Activated CD4-positive, alpha-beta memory T cell treated with anti-CD3 and anti-CD28 coated beads for 36 hours (primary cell): ENCODE measurements at regions of chr1 and their contacts with region 1.

Region 1: DNA sequence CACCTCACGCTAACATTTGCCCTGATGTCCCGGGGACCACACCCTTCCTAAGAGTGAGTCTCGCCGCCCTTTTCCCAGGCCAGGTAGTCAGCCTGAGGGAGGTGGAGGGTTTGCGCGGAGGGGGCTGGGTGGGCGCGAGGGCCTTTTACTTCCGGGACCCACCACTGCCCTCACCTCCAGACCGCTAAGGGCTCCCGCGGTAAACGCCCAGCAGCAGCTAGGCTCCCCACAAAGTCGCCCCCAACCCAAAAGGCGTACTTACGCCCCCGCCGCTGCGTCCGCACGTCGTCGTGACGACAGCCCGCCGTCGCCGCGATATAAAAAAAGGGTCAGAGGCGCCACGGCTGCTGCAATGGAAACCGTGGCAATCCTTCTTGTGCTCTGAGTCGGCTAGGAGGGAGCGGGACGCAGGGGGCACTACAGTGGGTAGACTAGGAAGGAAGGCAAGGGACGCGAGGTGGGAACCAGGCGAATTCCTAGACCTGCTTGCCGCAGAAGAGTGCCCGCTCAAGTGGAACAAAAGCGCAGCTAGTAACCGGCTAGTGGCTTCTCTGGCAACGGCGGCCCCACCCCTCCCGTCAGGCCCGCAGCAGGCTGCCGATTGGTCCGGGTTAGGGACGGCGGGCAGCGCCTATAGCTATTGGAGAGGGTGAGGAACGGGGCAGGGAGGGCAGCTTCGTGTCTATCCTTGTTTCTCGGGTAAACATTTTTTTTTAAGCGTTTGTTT is at the start of gene ODF2L:
- DNase-seq: peak; percentile 94
- H3K4me3 Mint-ChIP-seq: peak within 1 kb of the TSS; percentile 97
- H3K27ac Mint-ChIP-seq: peak within 1 kb of the TSS; percentile 92
- H3K4me1 Mint-ChIP-seq: peaks cover 48% of the 10 kb centered on the region
- H3K27me3 Mint-ChIP-seq: no peaks in the 10 kb centered on the region
- total RNA-seq, gene ODF2L: 31.5 to 32.3 TPM

Region 2: DNA sequence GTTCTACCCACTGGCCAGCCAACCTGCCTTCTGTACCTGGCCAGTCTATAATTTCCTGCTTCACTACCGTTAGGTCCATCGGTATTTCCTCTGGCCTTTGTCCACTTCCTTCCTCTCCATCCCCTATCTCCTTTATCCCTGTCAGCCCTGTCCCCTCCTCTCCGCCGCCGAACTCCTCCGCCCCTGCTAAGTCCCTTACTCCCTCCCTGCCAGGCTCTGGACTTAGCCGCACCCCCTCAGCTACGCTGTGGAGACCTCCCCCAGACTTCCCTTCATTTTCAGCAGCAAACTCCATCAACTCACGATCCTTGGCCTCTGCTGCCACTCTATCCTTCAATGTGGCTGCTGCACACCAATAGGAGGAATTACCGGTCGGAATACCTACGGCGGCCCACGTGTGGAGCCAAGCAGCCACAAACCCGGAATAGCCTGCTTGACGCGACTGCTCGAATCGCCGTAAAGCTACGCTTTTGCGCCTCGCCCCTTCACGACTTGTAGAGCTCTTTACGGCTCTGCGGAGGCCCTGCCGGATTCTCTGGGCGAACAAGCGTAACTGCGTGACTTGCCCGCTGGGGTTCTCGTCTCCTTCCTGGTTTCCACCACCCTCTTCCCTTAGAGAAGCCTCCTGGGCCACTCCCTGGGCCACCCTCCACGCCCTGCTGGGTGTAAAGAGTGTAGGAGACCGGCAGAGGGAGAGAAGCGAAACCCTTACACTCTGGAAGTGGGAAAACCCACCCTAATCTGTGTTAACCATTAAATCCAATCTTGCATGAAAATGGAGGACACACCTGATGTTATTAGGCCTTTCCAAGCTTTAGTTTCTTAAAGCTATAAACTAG is 687.7 kb before region 1 on chr1 and contains the start of gene ZNHIT6:
- CTCF ChIA-PET with region 1: no interaction called
- POLR2A ChIA-PET with region 1: interaction called, 3 read pairs
- intact Hi-C with region 1: loop called (anchors 10 kb)
- DNase-seq: peak; percentile 93
- H3K4me3 Mint-ChIP-seq: no peak within 1 kb of the TSS
- H3K27ac Mint-ChIP-seq: no peak within 1 kb of the TSS
- H3K4me1 Mint-ChIP-seq: peaks cover 23% of the 10 kb centered on the region
- H3K27me3 Mint-ChIP-seq: no peaks in the 10 kb centered on the region
- total RNA-seq, gene ZNHIT6: 18.7 TPM

Region 3: DNA sequence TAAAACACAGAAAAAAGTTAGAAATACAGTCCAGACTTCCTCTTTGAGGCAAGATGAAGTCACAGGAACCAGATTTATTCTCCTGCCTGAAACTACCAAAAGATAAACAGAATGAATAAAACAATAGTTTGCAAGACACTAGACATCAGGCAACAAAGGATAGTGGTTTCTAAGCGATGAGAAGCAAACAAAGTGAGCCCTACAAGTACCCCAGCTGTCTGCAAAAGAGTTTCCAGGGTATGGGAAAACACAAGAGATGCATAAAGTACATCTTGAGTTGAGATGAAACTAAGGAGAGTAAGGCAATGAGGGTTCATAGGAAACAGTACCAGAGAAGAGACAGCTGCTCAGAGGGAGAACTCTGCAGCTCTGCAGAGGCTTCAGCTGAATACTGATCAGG is 156.0 kb before region 1 on chr1:
- CTCF ChIA-PET with region 1: no interaction called
- POLR2A ChIA-PET with region 1: no interaction called
- intact Hi-C with region 1: no loop called
- DNase-seq: no peak
- H3K4me3 Mint-ChIP-seq: no peak overlapping the region
- H3K27ac Mint-ChIP-seq: no peak overlapping the region
- H3K4me1 Mint-ChIP-seq: no peaks in the 10 kb centered on the region
- H3K27me3 Mint-ChIP-seq: peaks cover 3% of the 10 kb centered on the region

Region 4: GRCh38 chr1:86370601-86371022 is 25.3 kb before region 1 on chr1:
- CTCF ChIA-PET with region 1: no interaction called
- POLR2A ChIA-PET with region 1: no interaction called
- intact Hi-C with region 1: no loop called
- DNase-seq: no peak
- H3K4me3 Mint-ChIP-seq: no peak overlapping the region
- H3K27ac Mint-ChIP-seq: no peak overlapping the region
- H3K4me1 Mint-ChIP-seq: no peaks in the 10 kb centered on the region
- H3K27me3 Mint-ChIP-seq: no peaks in the 10 kb centered on the region

Region 5: GRCh38 chr1:87045761-87046304 is 649.9 kb after region 1 on chr1:
- CTCF ChIA-PET with region 1: no interaction called
- POLR2A ChIA-PET with region 1: no interaction called
- intact Hi-C with region 1: loop called (anchors 10 kb)
- DNase-seq: peak; percentile 75
- H3K4me3 Mint-ChIP-seq: peak overlapping the region; percentile 45
- H3K27ac Mint-ChIP-seq: peak overlapping the region; percentile 82
- H3K4me1 Mint-ChIP-seq: peaks cover 48% of the 10 kb centered on the region
- H3K27me3 Mint-ChIP-seq: no peaks in the 10 kb centered on the region

Region 6: GRCh38 chr1:87335175-87335884 is 939.4 kb after region 1 on chr1:
- CTCF ChIA-PET with region 1: no interaction called
- POLR2A ChIA-PET with region 1: no interaction called
- intact Hi-C with region 1: loop called (anchors 10 kb)
- DNase-seq: peak; percentile 75
- H3K4me3 Mint-ChIP-seq: peak overlapping the region; percentile 76
- H3K27ac Mint-ChIP-seq: peak overlapping the region; percentile 91
- H3K4me1 Mint-ChIP-seq: peaks cover 60% of the 10 kb centered on the region
- H3K27me3 Mint-ChIP-seq: peaks cover 6% of the 10 kb centered on the region